ENCODE measurements at regions of chr1 and their contacts with region 1.

Region 1: DNA sequence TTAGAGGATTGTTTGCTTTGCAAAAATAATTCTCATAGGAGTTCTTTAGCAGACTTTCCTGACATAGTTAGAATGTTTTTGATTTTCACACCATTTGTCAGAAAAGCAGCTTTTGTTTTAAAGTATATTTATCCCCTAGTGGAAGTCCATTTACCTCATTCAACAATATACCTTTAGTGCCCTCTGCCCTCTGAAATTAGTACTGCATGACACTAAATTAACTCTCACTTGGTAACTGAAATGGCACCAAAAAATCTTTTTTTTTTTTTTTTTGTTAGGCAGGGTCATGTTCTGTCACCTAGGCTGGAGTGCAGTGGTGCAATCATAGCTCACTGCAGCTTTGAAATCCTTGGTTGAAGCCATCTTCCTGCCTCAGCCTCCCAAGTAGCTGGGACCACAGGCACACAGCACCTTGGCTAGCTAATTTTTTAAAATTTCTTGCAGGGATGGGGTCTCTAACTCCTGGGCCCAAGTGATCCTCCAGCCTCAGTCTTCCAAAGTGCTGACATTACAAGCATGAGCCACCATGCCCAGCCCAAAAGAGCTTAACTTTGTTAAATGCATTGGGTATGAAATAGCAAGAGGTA is 13.6 kb downstream of the LRRC42 start:
- DNase-seq: peak; percentile 47
- H3K4me3 ChIP-seq: no peak overlapping the region
- H3K27ac ChIP-seq: no peak overlapping the region
- H3K4me1 ChIP-seq: peaks cover 4 to 7% of the 10 kb centered on the region in 2 experiments; a peak in 3 of 4 replicates
- H3K27me3 ChIP-seq: no peaks in the 10 kb centered on the region
- CTCF ChIP-seq: peak; percentile 71
- EP300 ChIP-seq: no peak
- RAD21 ChIP-seq: peak; percentile 63

Region 2: GRCh38 chr1:53869454-53870117 is 90.2 kb before region 1 on chr1:
- CTCF ChIA-PET with region 1: interaction called, 17 read pairs
- POLR2A ChIA-PET with region 1: no interaction called
- DNase-seq: no peak
- H3K4me3 ChIP-seq: no peak overlapping the region
- H3K27ac ChIP-seq: no peak overlapping the region
- H3K4me1 ChIP-seq: no peaks in the 10 kb centered on the region
- H3K27me3 ChIP-seq: no peaks in the 10 kb centered on the region
- CTCF ChIP-seq: no peak
- EP300 ChIP-seq: no peak
- RAD21 ChIP-seq: no peak

Region 3: GRCh38 chr1:53878492-53879105 is 81.2 kb before region 1 on chr1:
- CTCF ChIA-PET with region 1: interaction called, 60 read pairs
- POLR2A ChIA-PET with region 1: no interaction called
- DNase-seq: peak; percentile 39
- H3K4me3 ChIP-seq: no peak overlapping the region
- H3K27ac ChIP-seq: no peak overlapping the region
- H3K4me1 ChIP-seq: no peaks in the 10 kb centered on the region
- H3K27me3 ChIP-seq: no peaks in the 10 kb centered on the region
- CTCF ChIP-seq: peak; percentile 82
- EP300 ChIP-seq: no peak
- RAD21 ChIP-seq: peak; percentile 68

Region 4: GRCh38 chr1:53889304-53890298 is 70.2 kb before region 1 on chr1 and contains the start of gene YIPF1:
- CTCF ChIA-PET with region 1: interaction called, 14 read pairs
- POLR2A ChIA-PET with region 1: no interaction called
- DNase-seq: peak; percentile 94
- H3K4me3 ChIP-seq: peak within 1 kb of the TSS; percentile 80 to 100
- H3K27ac ChIP-seq: peak within 1 kb of the TSS; percentile 54 to 75
- H3K4me1 ChIP-seq: peaks cover 0 to 7% of the 10 kb centered on the region in 2 experiments; a peak in 2 of 4 replicates
- H3K27me3 ChIP-seq: no peaks in the 10 kb centered on the region
- CTCF ChIP-seq: no peak
- EP300 ChIP-seq: no peak
- RAD21 ChIP-seq: no peak
- polyA plus RNA-seq, gene YIPF1: 23.1 and 31.7 TPM in 2 replicates

Region 5: DNA sequence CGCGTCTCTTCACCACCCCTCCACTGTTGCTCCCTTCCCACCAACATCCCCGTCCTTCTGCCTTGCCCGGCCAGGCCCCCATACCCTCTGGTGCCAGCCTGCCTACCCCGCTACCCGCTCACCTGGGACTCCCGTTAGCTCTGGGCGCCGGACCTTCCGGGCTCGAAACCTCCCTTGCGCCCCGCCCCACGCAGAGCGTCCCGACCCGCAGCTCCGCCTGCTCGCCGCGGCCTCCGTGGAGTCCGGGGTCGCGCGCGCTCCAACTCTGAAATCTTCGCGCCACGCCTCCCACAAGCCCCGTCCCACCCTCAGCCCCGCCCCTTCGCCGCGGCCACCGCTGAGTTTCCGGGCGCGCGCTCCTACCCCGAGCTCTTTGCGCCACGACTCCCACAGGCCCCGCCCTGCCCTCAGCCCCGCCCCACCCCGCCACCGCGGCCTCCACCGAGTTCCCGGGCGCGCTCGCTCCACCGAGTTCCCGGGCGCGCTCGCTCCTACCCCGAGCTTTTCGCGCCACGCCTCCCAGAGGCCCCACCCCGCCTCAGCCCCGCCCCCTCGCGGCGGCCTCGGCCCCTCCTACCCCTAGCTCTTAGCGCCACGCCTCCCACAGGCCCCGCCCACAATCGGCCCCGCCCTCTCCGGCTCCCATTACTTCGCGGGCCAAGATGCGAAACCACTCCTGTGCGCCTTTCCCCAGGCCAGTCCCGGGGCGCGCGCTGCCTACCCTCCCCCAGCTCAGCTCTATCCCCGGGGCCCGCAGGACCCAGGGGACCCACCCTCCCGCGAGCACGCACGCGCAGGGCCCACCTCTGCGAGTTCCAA is 14.1 kb before region 1 on chr1 and contains the start of gene IFT25:
- CTCF ChIA-PET with region 1: interaction called, 43 read pairs
- POLR2A ChIA-PET with region 1: interaction called, 4 read pairs
- DNase-seq: peak; percentile 97
- H3K4me3 ChIP-seq: peak within 1 kb of the TSS; percentile 72 to 95
- H3K27ac ChIP-seq: peak within 1 kb of the TSS; percentile 79 to 92
- H3K4me1 ChIP-seq: peaks cover 11 to 31% of the 10 kb centered on the region in 2 experiments; a peak in 2 of 4 replicates
- H3K27me3 ChIP-seq: no peaks in the 10 kb centered on the region
- CTCF ChIP-seq: no peak
- EP300 ChIP-seq: no peak
- RAD21 ChIP-seq: no peak
- polyA plus RNA-seq, gene IFT25: 25.7 TPM in 2 replicates

Region 6: GRCh38 chr1:53971718-53972117 is 12.0 kb after region 1 on chr1:
- CTCF ChIA-PET with region 1: interaction called, 47 read pairs
- POLR2A ChIA-PET with region 1: no interaction called
- DNase-seq: no peak
- H3K4me3 ChIP-seq: no peak overlapping the region
- H3K27ac ChIP-seq: no peak overlapping the region
- H3K4me1 ChIP-seq: no peaks in the 10 kb centered on the region
- H3K27me3 ChIP-seq: no peaks in the 10 kb centered on the region
- CTCF ChIP-seq: no peak
- EP300 ChIP-seq: no peak
- RAD21 ChIP-seq: no peak

Measured in SK-N-SH (cell line).